HCT116 (cell line): ENCODE measurements at regions of chr5 and their contacts with region 1.

Region 1: GRCh38 chr5:102583276-102584124 is 84.7 kb upstream of the SLCO6A1 start:
- DNase-seq: peak; percentile 16
- ATAC-seq: peak; percentile 63
- H3K4me3 ChIP-seq: no peak overlapping the region
- H3K27ac ChIP-seq: no peak overlapping the region
- H3K4me1 ChIP-seq: no peaks in the 10 kb centered on the region
- H3K27me3 ChIP-seq: no peaks in the 10 kb centered on the region
- CTCF ChIP-seq: peak; percentile 30 to 98 (median 73); a peak in 5 of 6 replicates
- POLR2A ChIP-seq: no peak
- RAD21 ChIP-seq: peak; percentile 74

Region 2: GRCh38 chr5:102670224-102670836 is 86.8 kb after region 1 on chr5:
- CTCF ChIA-PET with region 1: interaction called, 3 read pairs
- POLR2A ChIA-PET with region 1: no interaction called
- RAD21 ChIA-PET with region 1: no interaction called
- intact Hi-C with region 1: loop called (anchors 1 kb)
- DNase-seq: peak; percentile 47
- ATAC-seq: peak; percentile 95
- H3K4me3 ChIP-seq: peak overlapping the region; percentile 45 to 57
- H3K27ac ChIP-seq: peak overlapping the region; percentile 53; the same call in 1 of the 2 replicates
- H3K4me1 ChIP-seq: 0 out of 4 replicates have a peak, but pooled peaks cover 0 to 3% of the 10 kb centered on the region in 2 experiments
- H3K27me3 ChIP-seq: no peaks in the 10 kb centered on the region
- CTCF ChIP-seq: peak; percentile 76 to 96 (median 90); a peak in 5 of 6 replicates
- POLR2A ChIP-seq: no peak
- RAD21 ChIP-seq: peak; percentile 60

Region 3: DNA sequence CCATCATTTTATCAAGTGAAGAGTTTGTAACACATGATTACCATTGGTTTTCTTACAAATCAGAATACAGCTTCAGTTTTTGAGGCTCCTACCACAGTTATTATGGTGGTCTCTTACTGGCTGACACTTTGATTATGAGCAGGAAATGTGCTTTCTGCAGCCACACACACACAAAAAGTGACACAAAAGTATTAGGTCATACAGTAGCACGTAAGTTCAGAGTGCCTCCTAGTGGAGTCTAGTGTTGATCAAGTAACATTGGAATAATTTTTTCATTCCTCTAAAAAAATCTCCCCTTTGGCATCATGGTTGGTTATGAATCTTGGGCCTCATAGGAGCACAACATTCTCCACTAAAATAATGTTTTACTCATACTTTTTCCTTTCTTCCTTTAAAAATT is 209.2 kb after region 1 on chr5:
- CTCF ChIA-PET with region 1: no interaction called
- POLR2A ChIA-PET with region 1: no interaction called
- RAD21 ChIA-PET with region 1: no interaction called
- intact Hi-C with region 1: loop called (anchors 10 kb)
- DNase-seq: no peak
- ATAC-seq: peak; percentile 66
- H3K4me3 ChIP-seq: no peak overlapping the region
- H3K27ac ChIP-seq: no peak overlapping the region
- H3K4me1 ChIP-seq: peaks cover 26 to 49% of the 10 kb centered on the region in 2 experiments
- H3K27me3 ChIP-seq: no peaks in the 10 kb centered on the region
- CTCF ChIP-seq: peak; percentile 16 to 40 (median 26); a peak in 3 of 6 replicates
- POLR2A ChIP-seq: no peak
- RAD21 ChIP-seq: peak; percentile 48

Region 4: GRCh38 chr5:102971697-102972293 is 388.3 kb after region 1 on chr5:
- CTCF ChIA-PET with region 1: interaction called, 3 read pairs
- POLR2A ChIA-PET with region 1: no interaction called
- RAD21 ChIA-PET with region 1: no interaction called
- intact Hi-C with region 1: loop called (anchors 2 kb)
- DNase-seq: peak; percentile 26
- ATAC-seq: peak; percentile 84
- H3K4me3 ChIP-seq: no peak overlapping the region
- H3K27ac ChIP-seq: peak overlapping the region; percentile 42; the same call in 1 of the 2 replicates
- H3K4me1 ChIP-seq: peaks cover 0 to 5% of the 10 kb centered on the region in 2 experiments; a peak in 1 of 4 replicates
- H3K27me3 ChIP-seq: no peaks in the 10 kb centered on the region
- CTCF ChIP-seq: peak; percentile 52 to 63 (median 59); a peak in 5 of 6 replicates
- POLR2A ChIP-seq: no peak
- RAD21 ChIP-seq: peak; percentile 81

Region 5: GRCh38 chr5:103041071-103041676 is 457.7 kb after region 1 on chr5:
- CTCF ChIA-PET with region 1: interaction called, 7 read pairs
- POLR2A ChIA-PET with region 1: no interaction called
- RAD21 ChIA-PET with region 1: no interaction called
- intact Hi-C with region 1: loop called (anchors 1 kb)
- DNase-seq: peak; percentile 49
- ATAC-seq: peak; percentile 61
- H3K4me3 ChIP-seq: no peak overlapping the region
- H3K27ac ChIP-seq: no peak overlapping the region
- H3K4me1 ChIP-seq: no peaks in the 10 kb centered on the region
- H3K27me3 ChIP-seq: no peaks in the 10 kb centered on the region
- CTCF ChIP-seq: peak; percentile 24 to 83 (median 56); a peak in 5 of 6 replicates
- POLR2A ChIP-seq: no peak
- RAD21 ChIP-seq: peak; percentile 84